ENCODE measurements at regions of chr1 and their contacts with region 1.

Region 1: DNA sequence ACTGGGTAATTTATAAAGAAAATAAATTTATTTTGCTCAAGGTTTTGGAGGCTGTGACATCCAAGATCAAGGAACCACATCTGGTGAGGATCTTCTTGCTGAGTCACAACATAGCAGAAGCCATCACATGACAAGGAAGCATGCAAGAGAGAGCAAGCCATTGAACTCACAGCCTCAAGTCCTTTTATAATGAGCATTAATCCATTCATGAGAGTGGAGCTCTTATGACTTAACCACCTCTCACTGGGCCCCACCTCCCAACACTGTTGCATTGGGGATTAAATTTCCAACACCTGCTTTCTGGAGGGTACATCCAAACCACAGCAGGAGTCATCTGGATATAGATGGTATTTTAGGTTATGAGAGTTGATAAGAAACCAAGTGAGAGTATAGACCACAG is 20.6 kb upstream of the EGLN1 start:
- DNase-seq: no peak
- ATAC-seq: no peak

Region 2: GRCh38 chr1:231106347-231106746 is 336.4 kb before region 1 on chr1:
- intact Hi-C with region 1: no loop called
- DNase-seq: no peak
- ATAC-seq: no peak

Region 3: DNA sequence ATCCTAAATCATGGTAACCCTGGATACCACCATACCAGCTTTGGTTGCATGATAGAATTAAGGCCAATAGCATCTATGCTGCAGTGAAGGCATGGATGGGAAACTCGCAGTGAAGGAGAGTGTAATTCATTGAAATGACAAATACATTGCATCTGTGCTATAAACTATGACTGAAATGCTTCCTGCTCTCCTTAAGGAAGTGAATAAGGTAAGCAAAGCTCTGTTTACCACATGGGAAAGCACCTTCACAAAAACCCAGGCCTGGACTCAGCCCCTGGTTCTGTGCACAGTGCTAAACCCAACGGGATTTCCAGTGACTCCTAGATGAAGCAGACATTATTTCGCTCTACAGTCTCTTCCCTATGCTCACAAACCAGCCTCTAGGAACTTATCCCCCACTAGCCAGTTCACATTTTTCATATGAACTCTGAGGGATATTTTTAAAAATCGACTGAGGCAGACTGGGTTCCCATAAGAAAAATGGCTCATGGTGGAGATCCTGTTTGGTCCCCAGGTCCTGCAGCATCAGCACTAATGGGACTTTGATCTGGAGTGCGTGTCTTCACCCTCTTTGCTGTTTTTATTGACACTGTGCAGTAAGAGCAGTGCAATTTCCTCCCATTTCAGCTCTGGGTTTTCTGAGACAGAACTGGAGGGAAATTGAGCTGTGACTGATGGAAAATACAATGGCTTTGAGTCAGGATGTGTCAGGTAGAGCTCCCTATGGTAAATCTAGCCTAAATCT is 824.5 kb after region 1 on chr1:
- intact Hi-C with region 1: loop called (anchors 5 kb)
- DNase-seq: no peak
- ATAC-seq: no peak

Measured in sciatic nerve (tissue), 2 donors.